WTC11 (cell line): ENCODE measurements at regions of chr1 and their contacts with region 1.

Region 1: GRCh38 chr1:54121482-54122134 is 31.2 kb downstream of the CDCP2 start:
- DNase-seq: peak; percentile 89
- ATAC-seq: peak; percentile 90
- H3K4me3 Mint-ChIP-seq: peak overlapping the region; percentile 63
- H3K27ac Mint-ChIP-seq: no peak overlapping the region
- H3K4me1 Mint-ChIP-seq: peaks cover 29% of the 10 kb centered on the region
- H3K27me3 Mint-ChIP-seq: peaks cover 20% of the 10 kb centered on the region
- CTCF ChIP-seq: peak; percentile 64; the same call in 1 of the 2 replicates

Region 2: GRCh38 chr1:53992085-53992874 is 129.3 kb before region 1 on chr1:
- CTCF ChIA-PET with region 1: interaction called, 12 read pairs
- POLR2A ChIA-PET with region 1: no interaction called
- DNase-seq: peak; percentile 63
- ATAC-seq: peak; percentile 98
- H3K4me3 Mint-ChIP-seq: no peak overlapping the region
- H3K27ac Mint-ChIP-seq: no peak overlapping the region
- H3K4me1 Mint-ChIP-seq: no peaks in the 10 kb centered on the region
- H3K27me3 Mint-ChIP-seq: 0 out of 2 replicates have a peak, but pooled peaks cover under 1% of the 10 kb centered on the region
- CTCF ChIP-seq: peak; percentile 42

Region 3: GRCh38 chr1:54110996-54111395 is 10.6 kb before region 1 on chr1:
- CTCF ChIA-PET with region 1: interaction called, 14 read pairs
- POLR2A ChIA-PET with region 1: no interaction called
- DNase-seq: no peak
- ATAC-seq: no peak
- H3K4me3 Mint-ChIP-seq: no peak overlapping the region
- H3K27ac Mint-ChIP-seq: no peak overlapping the region
- H3K4me1 Mint-ChIP-seq: 0 out of 2 replicates have a peak, but pooled peaks cover 2% of the 10 kb centered on the region
- H3K27me3 Mint-ChIP-seq: no peaks in the 10 kb centered on the region
- CTCF ChIP-seq: no peak

Region 4: DNA sequence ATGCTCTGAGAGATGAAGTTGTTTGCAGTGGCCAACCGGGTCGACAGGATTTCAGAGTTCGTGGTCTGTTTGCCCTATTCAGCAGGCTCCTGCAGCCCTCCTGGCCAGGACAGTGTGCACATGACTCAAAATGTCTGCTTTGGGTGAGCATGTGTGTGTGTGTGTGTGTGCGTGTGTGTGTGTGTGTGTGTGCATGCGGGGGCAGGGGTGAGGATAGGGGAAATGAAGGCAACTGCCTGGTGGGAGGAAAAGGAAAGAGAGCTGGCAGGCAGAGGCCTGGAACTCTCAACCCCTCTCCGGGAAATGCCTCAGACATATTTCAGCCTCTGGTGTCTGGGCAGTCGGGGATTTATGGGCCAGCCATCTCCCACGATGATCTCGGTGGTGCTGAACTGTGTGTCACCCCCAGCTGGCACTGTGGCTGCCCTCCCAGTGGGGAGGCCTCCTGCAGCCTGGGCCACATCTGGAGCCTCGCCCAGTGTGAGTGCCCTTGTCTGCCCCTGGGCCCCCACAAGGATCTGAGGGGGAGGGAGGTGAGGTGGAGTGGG is 16.0 kb after region 1 on chr1:
- CTCF ChIA-PET with region 1: interaction called, 39 read pairs
- POLR2A ChIA-PET with region 1: interaction called, 3 read pairs
- DNase-seq: no peak
- ATAC-seq: no peak
- H3K4me3 Mint-ChIP-seq: no peak overlapping the region
- H3K27ac Mint-ChIP-seq: no peak overlapping the region
- H3K4me1 Mint-ChIP-seq: peaks cover 35% of the 10 kb centered on the region
- H3K27me3 Mint-ChIP-seq: peaks cover 3% of the 10 kb centered on the region; the same call in 1 of the 2 replicates
- CTCF ChIP-seq: no peak

Region 5: GRCh38 chr1:54180701-54181360 is 59.2 kb after region 1 on chr1:
- CTCF ChIA-PET with region 1: interaction called, 17 read pairs
- POLR2A ChIA-PET with region 1: no interaction called
- DNase-seq: no peak
- ATAC-seq: no peak
- H3K4me3 Mint-ChIP-seq: no peak overlapping the region
- H3K27ac Mint-ChIP-seq: no peak overlapping the region
- H3K4me1 Mint-ChIP-seq: peaks cover 4% of the 10 kb centered on the region
- H3K27me3 Mint-ChIP-seq: no peaks in the 10 kb centered on the region
- CTCF ChIP-seq: no peak

Region 6: DNA sequence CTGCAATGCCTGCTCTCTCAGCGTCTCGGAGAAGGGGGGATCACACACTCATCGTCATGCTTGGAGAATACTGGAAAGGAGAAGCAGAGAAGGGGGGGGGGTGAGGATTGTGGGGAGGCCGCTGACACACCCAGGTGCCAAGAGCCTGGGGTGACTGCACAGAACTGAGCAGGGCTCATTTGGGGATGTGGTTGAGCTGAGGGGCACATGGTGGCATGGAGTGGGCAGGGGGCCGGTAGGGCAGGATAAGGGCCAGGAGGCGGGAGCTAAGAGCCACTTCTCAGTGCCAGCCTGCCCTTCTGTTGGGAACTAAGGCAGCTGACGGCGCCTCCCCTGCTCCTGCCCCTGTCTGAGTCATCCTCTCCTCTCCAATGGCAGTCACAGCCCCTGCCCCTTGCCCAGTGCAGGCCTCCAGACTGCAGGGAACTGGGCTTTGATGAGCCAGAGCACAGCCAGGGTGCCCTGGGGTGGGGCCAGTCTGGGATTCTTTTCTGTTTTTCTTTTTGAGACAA is 105.5 kb after region 1 on chr1:
- CTCF ChIA-PET with region 1: interaction called, 12 read pairs
- POLR2A ChIA-PET with region 1: no interaction called
- DNase-seq: no peak
- ATAC-seq: no peak
- H3K4me3 Mint-ChIP-seq: no peak overlapping the region
- H3K27ac Mint-ChIP-seq: no peak overlapping the region
- H3K4me1 Mint-ChIP-seq: peaks cover 24% of the 10 kb centered on the region
- H3K27me3 Mint-ChIP-seq: no peaks in the 10 kb centered on the region
- CTCF ChIP-seq: no peak